ENCODE measurements at regions of chr20 and their contacts with region 1.

Region 1: GRCh38 chr20:35619196-35620095 is 3.8 kb downstream of the SPAG4 start:
- DNase-seq: peak; percentile 88
- ATAC-seq: peak; percentile 21 to 52

Region 2: GRCh38 chr20:35523298-35523888 is 96.1 kb before region 1 on chr20:
- intact Hi-C with region 1: no loop called
- DNase-seq: no peak
- ATAC-seq: peak; percentile 15 to 45

Region 3: GRCh38 chr20:35541783-35542588 is 77.5 kb before region 1 on chr20 and contains the start of gene ERGIC3:
- intact Hi-C with region 1: loop called in 1 of 2 experiments (anchors 5 kb)
- DNase-seq: peak; percentile 98
- ATAC-seq: peak; percentile 100
- total RNA-seq, gene ERGIC3: 119 to 120 TPM

Region 4: GRCh38 chr20:35664544-35665221 is 45.2 kb after region 1 on chr20 and contains the starts of genes CPNE1 and RBM12:
- intact Hi-C with region 1: loop called in 1 of 2 experiments (anchors 5 kb)
- DNase-seq: peak; percentile 92
- ATAC-seq: peak; percentile 97 to 98
- total RNA-seq, gene CPNE1: 69.1 to 84.1 TPM
- total RNA-seq, gene RBM12: 44.6 to 62.7 TPM

Measured in left cardiac atrium (tissue), 4 donors.